Activated CD4-positive, alpha-beta memory T cell treated with anti-CD3 and anti-CD28 coated beads, Interleukin-2, amount 10 ng/mL, durations not matched to agents 7 days and 5 days (primary cell): ENCODE measurements at regions of chr9 and their contacts with region 1.

Region 1: GRCh38 chr9:613771-614347 is 227.6 kb upstream of the DMRT1 start:
- DNase-seq: peak; percentile 43
- H3K4me3 Mint-ChIP-seq: no peak overlapping the region
- H3K27ac Mint-ChIP-seq: no peak overlapping the region
- H3K4me1 Mint-ChIP-seq: peaks cover 5% of the 10 kb centered on the region
- H3K27me3 Mint-ChIP-seq: no peaks in the 10 kb centered on the region

Region 2: GRCh38 chr9:763692-764524 is 150.0 kb after region 1 on chr9:
- CTCF ChIA-PET with region 1: interaction called, 18 read pairs
- POLR2A ChIA-PET with region 1: no interaction called
- DNase-seq: peak; percentile 61
- H3K4me3 Mint-ChIP-seq: no peak overlapping the region
- H3K27ac Mint-ChIP-seq: no peak overlapping the region
- H3K4me1 Mint-ChIP-seq: peaks cover 31% of the 10 kb centered on the region
- H3K27me3 Mint-ChIP-seq: peaks cover 41% of the 10 kb centered on the region

Region 3: GRCh38 chr9:806285-807156 is 192.7 kb after region 1 on chr9:
- CTCF ChIA-PET with region 1: interaction called, 18 read pairs
- POLR2A ChIA-PET with region 1: no interaction called
- DNase-seq: no peak
- H3K4me3 Mint-ChIP-seq: no peak overlapping the region
- H3K27ac Mint-ChIP-seq: no peak overlapping the region
- H3K4me1 Mint-ChIP-seq: no peaks in the 10 kb centered on the region
- H3K27me3 Mint-ChIP-seq: peaks cover 21% of the 10 kb centered on the region